ENCODE measurements at regions of chr3 and their contacts with region 1.

Region 1: DNA sequence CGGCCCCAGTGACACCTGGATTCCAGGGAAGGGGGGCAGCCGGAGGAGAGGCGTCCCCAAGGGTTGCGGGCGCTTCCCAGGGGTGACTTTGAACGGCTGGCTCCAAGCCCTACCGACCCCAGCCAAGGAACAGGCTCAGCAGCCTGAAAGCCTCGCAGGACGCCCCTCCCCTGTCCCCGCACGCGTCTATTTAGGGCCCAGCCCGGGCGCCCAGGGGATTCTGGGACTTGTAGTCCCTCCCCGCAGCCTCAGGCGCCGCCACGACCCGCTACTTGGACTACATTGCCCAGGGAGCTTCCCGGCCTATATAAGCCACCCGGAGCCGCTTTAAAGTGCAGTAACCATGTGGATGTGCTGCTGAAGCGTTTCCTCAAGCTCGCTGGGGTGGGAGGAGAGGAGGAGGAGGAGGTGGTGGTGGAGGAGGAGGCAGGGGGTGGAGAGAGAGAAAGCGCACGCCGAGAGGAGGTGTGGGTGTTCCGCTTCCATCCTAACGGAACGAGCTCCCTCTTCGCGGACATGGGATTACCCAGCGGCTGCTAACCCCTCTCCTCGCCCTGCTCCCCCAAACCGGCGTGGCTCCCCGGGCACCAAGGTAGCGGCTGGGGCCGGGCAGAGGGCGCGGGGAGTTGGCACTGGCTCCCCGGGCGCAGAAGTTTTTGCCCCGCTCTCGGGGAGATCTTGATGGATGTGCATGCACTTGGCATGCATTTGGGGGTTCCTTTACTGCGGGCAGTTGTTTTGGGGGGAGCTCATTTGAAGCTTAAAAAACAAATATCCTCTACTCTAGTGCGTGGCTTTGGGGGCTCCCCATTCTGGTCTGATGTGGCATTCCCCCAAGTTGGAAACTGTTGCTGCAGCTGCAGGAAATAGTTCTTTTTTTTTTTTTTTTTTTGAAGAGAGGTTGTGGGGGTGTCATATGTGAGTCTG is at the start of gene ITPR1:
- DNase-seq: peak; percentile 99
- ATAC-seq: peak; percentile 91
- H3K4me3 Mint-ChIP-seq: peak within 1 kb of the TSS; percentile 94
- H3K27ac Mint-ChIP-seq: peak within 1 kb of the TSS; percentile 89
- H3K4me1 Mint-ChIP-seq: peaks cover 39% of the 10 kb centered on the region
- H3K27me3 Mint-ChIP-seq: peaks cover 20% of the 10 kb centered on the region
- total RNA-seq, gene ITPR1: 53.8 to 57.3 TPM

Region 2: DNA sequence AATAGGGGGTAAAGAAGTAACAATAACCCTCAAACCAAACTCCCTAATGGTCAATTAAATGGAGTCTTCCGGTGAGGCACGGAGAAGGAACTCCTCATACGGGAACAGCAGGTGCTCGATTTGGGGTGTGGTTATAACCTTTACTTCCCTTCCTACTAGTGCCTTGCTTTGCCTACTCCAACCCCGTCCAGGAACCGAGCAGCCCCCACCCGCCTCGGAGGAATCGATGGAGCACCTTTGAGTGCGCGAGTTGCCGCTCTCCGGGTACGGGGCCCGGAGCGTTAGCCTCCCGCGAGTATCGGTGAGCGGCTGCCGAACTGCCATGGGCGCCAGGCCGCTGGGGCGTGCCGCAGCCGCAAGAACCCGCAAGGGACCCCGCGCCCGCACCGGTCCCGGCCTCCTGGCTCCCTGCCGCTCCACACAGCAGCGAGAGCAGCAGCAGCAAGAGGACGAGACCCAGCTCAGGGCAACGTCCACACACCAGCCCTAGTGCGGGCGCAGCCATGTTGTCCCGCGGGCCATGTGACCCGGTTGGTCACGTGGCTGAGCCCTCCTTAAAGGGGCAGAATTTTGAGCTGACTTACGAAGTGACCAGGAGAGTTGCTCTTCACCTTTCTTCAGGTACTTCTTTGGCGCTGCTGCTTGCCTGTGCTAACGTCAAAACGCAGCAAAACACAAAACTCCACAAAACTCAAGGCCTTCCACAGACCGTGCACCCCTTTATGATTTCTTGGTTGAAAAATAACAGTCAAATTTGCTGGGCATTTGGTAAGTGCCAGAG is 26.3 kb before region 1 on chr3 and contains the start of gene SUMF1:
- CTCF ChIA-PET with region 1: no interaction called
- POLR2A ChIA-PET with region 1: interaction called, 28 read pairs
- DNase-seq: peak; percentile 86
- ATAC-seq: peak; percentile 98
- H3K4me3 Mint-ChIP-seq: peak within 1 kb of the TSS; percentile 87
- H3K27ac Mint-ChIP-seq: peak within 1 kb of the TSS; percentile 92
- H3K4me1 Mint-ChIP-seq: peaks cover 17% of the 10 kb centered on the region
- H3K27me3 Mint-ChIP-seq: no peaks in the 10 kb centered on the region
- total RNA-seq, gene SUMF1: 7.4 to 8.7 TPM

Region 3: DNA sequence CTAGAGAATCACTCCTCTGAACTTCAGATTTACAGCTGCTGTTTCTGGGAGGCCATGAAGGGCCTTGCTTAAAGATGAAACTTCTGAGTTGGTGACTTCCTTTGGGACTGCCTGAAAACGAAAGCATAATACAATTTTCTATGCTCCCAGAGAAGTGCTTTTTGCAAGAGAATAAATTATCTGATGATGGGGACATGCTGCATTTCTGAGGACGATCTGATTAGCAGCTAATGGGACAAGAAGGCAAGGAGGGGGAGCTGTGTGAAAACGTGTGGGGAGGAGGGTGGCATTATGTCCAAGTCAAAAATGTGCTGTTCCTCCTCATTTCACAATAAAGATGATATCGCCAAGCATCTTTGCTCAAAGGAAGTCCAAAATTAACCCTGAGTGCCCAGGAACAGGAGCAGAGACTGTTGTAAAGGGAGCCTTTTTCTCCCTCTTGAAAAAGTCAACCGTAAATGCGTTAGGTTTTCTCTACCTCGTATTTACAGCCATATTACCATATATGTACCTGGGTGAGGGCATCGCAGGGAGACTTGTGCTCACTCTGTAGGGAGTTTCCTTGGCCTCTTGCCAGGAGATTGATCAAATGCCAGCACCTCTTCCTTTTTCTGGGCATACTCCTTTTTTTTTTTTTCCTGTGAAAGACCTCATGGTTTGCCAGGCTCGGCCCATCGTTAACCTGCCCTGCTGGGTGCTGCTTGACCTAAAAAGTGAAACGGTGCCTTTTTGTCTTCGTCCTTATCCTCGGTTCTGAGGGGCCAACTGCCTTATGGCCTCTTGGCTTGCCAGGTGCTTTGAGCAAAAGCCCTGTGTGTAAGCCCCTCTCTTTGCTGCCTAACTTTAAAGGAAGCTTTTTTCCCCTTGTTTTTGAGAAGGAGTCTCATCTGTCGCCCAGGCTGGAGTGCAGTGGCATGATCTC is 11.3 kb after region 1 on chr3:
- CTCF ChIA-PET with region 1: interaction called, 21 read pairs
- POLR2A ChIA-PET with region 1: interaction called, 51 read pairs
- DNase-seq: peak; percentile 50
- ATAC-seq: peak; percentile 83
- H3K4me3 Mint-ChIP-seq: peak overlapping the region; percentile 80
- H3K27ac Mint-ChIP-seq: peak overlapping the region; percentile 98
- H3K4me1 Mint-ChIP-seq: peaks cover 58% of the 10 kb centered on the region
- H3K27me3 Mint-ChIP-seq: no peaks in the 10 kb centered on the region